H1 (cell line): ENCODE measurements at regions of chr2 and their contacts with region 1.

Region 1: GRCh38 chr2:193627187-193627926 is 1432.6 kb upstream of the TMEFF2 start:
- DNase-seq: no peak
- H3K4me3 ChIP-seq: no peak overlapping the region
- H3K27ac ChIP-seq: no peak overlapping the region
- H3K4me1 ChIP-seq: no peaks in the 10 kb centered on the region; a peak in 2 of 7 replicates
- H3K27me3 ChIP-seq: no peaks in the 10 kb centered on the region
- CTCF ChIP-seq: no peak
- EP300 ChIP-seq: no peak
- POLR2A ChIP-seq: no peak
- RAD21 ChIP-seq: no peak

Region 2: DNA sequence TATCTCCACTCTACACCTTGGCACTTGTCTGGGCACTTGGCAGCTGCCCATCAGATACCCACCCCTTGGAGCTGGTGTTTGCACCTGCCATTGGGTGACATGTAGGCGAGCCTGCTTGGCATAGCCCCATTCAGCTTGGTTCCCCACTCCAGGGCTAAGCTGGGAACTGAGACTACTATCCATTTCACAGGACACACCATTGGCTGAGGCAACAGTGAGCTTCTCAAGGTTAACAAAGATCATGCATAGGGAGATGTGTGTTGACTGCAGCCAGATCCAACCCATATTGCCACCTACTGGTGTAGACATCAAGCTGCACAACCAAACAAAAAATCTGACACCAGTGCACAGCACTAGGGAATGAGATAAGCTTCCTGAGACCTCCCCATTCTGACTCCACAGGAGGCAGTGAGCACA is 42.8 kb before region 1 on chr2:
- CTCF ChIA-PET with region 1: interaction called, 11 read pairs
- POLR2A ChIA-PET with region 1: no interaction called
- DNase-seq: peak in 1 of 2 experiments; percentile 51
- H3K4me3 ChIP-seq: no peak overlapping the region
- H3K27ac ChIP-seq: no peak overlapping the region
- H3K4me1 ChIP-seq: peaks cover 0 to 2% (median 0%) of the 10 kb centered on the region in 4 experiments; a peak in 1 of 7 replicates
- H3K27me3 ChIP-seq: no peaks in the 10 kb centered on the region
- CTCF ChIP-seq: peak in 2 of 3 experiments; percentile 31 to 64; a peak in 2 of 4 replicates
- EP300 ChIP-seq: no peak
- POLR2A ChIP-seq: no peak
- RAD21 ChIP-seq: peak; percentile 59 to 62